ENCODE measurements at regions of chr4 and their contacts with region 1.

Region 1: DNA sequence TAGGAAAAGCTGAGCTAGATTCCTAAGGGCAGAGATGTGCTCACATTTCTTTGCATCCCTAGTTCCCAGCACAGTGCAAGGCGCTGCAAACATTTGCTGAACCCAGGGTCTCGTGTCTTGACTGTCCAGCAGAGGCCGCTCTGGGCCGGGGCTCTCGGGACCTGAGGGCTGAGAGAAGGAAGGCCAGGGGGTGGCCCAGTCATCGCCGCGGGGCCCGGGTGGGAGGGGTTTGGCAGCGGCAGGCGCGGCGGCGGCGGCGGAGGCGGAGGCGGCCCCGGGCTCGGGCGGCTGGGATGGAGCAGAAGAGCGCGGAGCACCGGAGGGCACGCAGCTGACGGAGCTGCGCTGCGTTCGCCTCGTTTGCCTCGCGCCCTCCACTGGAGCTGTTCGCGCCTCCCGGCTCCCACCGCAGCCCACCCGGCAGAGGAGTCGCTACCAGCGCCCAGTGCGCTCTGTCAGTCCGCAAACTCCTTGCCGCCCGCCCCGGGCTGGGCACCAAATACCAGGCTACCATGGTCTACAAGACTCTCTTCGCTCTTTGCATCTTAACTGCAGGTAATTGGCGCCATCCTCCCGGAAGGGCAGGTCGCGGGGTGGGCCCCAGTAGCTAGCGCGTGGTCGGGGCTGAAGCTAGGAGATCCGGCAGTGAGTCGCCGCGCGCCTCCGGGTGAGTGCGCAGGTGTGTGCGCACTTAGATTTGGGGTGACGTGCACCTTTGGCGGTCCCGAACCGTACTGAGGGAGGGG is at the start of gene PARM1:
- DNase-seq: peak; percentile 84 to 99 (median 92)

Region 2: GRCh38 chr4:74874753-74875367 is 58.1 kb before region 1 on chr4:
- intact Hi-C with region 1: loop called (anchors 5 kb)
- DNase-seq: peak in 3 of 10 donors; percentile 14 to 38 (median 24)

Region 3: GRCh38 chr4:74969507-74970474 is 36.8 kb after region 1 on chr4:
- intact Hi-C with region 1: no loop called
- DNase-seq: peak in 1 of 10 donors; percentile 80

Region 4: DNA sequence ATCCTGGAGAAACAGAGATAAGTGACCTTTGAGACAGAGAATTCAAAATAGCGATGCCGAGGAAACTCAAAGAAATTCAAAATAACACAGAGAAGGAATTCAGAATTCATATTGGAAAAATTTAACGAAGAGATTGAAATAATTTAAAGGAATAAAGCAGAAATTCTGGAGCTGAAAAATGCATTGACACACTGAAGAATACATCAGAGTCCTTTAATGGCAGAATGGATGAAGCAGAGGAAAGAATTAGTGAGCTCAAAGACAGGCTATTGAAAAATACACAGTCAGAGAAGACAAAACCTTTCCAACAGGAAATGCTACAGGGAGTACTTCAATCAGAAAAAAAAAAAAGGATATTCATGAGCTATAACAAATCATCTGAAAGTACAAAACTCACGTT is 185.8 kb after region 1 on chr4:
- intact Hi-C with region 1: loop called (anchors 5 kb)
- DNase-seq: no peak

Region 5: DNA sequence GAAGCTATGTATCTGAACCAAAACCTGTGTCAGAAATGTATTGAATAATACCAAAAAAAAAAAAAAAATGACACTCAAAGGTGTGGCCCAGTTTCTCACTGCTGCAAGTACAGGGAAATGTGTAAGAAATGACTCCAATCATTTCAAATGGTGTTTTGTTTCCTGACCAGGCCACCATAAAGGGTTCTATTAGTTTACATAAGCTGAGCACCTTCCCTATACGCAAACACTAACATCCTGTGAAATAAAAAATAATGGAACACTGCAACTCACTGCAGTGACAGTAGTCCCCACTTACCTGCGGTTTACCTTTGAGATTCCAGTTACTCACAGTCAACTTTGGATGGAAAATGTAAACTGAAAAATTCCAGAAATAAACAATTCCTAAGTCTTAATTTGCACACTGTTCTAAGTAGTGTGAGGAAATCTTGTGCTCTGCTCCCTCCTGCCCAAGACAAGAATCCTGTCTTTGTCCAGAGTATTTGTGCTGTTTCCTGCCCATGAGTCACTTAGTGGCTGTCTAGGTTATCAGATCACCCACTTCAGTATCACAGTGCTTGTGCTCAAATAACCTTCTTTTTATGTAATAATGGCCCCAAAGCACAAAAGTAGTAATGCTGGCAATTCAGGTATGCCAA is 315.9 kb after region 1 on chr4:
- intact Hi-C with region 1: no loop called
- DNase-seq: no peak

Region 6: GRCh38 chr4:75289914-75290582 is 357.1 kb after region 1 on chr4:
- intact Hi-C with region 1: loop called (anchors 5 kb)
- DNase-seq: no peak

Region 7: GRCh38 chr4:75469896-75470295 is 536.9 kb after region 1 on chr4:
- intact Hi-C with region 1: loop called (anchors 5 kb)
- DNase-seq: no peak

Region 8: GRCh38 chr4:75490155-75490554 is 557.2 kb after region 1 on chr4:
- intact Hi-C with region 1: loop called (anchors 5 kb)
- DNase-seq: no peak

Measured in posterior cingulate gyrus (tissue), 11 donors.